Common myeloid progenitor, CD34-positive (primary cell): ENCODE measurements at regions of chr11 and their contacts with region 1.

Region 1: GRCh38 chr11:299951-300735 is 817 bp upstream of the IFITM5 start:
- DNase-seq: peak; percentile 73 to 87 (median 82)
- H3K4me3 ChIP-seq: no peak overlapping the region
- H3K27ac ChIP-seq: no peak overlapping the region
- H3K4me1 ChIP-seq: peaks cover 0 to 11% (median 5%) of the 10 kb centered on the region in 4 experiments
- H3K27me3 ChIP-seq: peaks cover 0 to 33% (median 0%) of the 10 kb centered on the region in 5 experiments

Region 2: GRCh38 chr11:340539-341512 is 40.7 kb after region 1 on chr11:
- CTCF ChIA-PET with region 1: no interaction called
- POLR2A ChIA-PET with region 1: no interaction called
- DNase-seq: no peak
- H3K4me3 ChIP-seq: no peak overlapping the region
- H3K27ac ChIP-seq: no peak overlapping the region
- H3K4me1 ChIP-seq: peaks cover 8 to 23% (median 15%) of the 10 kb centered on the region in 4 experiments
- H3K27me3 ChIP-seq: no peaks in the 10 kb centered on the region

Region 3: DNA sequence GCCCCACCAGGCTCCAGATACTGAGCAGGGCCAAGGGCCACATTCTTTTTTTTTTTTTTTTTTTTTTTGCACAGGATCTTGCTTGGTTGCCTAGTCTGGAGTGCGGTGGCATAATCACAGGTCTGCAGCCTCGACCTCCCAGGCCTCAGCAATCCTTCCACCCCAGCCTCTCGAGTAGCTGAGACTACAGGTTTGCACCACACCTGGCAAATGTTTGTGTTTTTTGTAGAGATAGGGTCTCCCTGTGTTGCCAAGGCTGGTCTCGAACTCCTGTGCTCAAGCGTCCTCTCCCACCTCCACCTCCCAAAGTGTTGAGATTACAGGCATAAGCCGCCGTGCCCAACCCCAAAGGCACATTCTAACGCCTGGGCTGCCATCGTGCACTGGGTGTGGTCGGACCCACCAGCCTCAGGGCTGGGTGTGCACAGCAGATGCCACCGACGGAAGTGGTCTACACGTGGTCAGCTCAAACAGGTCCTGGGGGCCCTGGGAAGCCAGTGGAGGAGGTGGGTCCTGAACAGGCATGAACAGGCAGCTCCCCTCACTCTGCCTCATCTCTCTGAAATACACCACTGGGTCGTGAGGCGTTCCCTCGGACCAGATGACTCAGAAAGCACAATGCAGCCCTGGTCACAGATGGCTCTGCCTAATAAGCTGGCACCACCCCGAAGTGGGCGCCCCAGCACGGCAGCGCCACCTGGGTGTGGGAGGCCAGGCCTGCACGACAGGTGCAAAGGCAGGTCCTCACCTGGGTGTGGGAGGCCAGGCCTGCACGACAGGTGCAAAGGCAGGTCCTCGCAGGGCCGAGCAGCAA is 64.0 kb after region 1 on chr11:
- CTCF ChIA-PET with region 1: interaction called, 36 read pairs
- POLR2A ChIA-PET with region 1: no interaction called
- DNase-seq: peak; percentile 43 to 66 (median 61)
- H3K4me3 ChIP-seq: no peak overlapping the region
- H3K27ac ChIP-seq: no peak overlapping the region
- H3K4me1 ChIP-seq: peaks cover 0 to 9% (median 6%) of the 10 kb centered on the region in 4 experiments
- H3K27me3 ChIP-seq: peaks cover 0 to 38% (median 20%) of the 10 kb centered on the region in 5 experiments